Left ventricle myocardium superior (tissue), 1 donor: ENCODE measurements at regions of chr6 and their contacts with region 1.

Region 1: GRCh38 chr6:83711958-83712357 is 3.1 kb upstream of the SNAP91 start:
- DNase-seq: no peak
- ATAC-seq: no peak

Region 2: DNA sequence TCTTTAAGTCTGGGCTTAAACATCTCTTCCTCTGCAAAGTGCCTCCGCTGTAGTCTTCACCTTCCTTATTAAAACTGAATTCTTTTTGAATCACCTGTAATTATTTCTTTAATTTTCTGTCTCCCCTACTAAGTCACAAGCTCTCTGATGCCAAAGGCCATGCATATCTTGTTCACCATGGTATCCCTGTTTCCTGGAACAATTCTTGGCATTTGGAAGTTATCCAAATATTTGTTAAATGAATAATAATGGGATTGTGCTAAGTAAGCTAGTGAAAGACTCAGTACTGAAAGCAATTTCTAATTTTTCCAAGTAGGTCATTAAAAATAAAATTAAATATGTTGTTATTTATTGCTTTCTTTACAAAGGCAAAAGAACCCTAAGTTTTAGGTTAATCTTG is 15.3 kb before region 1 on chr6:
- intact Hi-C with region 1: loop called (anchors 1 kb)
- DNase-seq: no peak
- ATAC-seq: no peak

Region 3: DNA sequence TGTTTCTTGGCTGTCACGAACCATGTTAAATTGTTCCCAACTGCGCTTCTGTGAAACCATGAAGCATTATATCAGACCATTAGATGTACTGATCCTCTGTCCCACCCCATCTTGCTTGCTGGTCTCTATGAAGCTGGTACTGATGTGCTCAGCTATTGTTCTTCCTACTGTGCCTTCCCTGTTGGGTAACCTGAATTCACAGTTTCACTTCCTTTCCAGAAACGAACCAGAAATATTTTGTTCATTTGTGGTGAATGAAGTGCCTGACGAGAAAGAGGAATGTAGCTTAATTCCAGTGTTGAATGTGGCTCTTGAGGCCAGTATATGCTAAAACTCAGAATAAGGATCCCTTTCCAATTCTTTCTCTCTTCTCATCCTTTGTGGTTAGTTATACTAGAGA is 55.1 kb after region 1 on chr6:
- intact Hi-C with region 1: no loop called
- DNase-seq: no peak
- ATAC-seq: no peak